Activated CD4-positive, alpha-beta memory T cell treated with anti-CD3 and anti-CD28 coated beads for 36 hours (primary cell): ENCODE measurements at regions of chr4 and their contacts with region 1.

Region 1: GRCh38 chr4:88613417-88613875 is 21.2 kb downstream of the HERC3 start:
- DNase-seq: peak; percentile 48
- H3K4me3 Mint-ChIP-seq: peak overlapping the region; percentile 58
- H3K27ac Mint-ChIP-seq: peak overlapping the region; percentile 87
- H3K4me1 Mint-ChIP-seq: peaks cover 78% of the 10 kb centered on the region
- H3K27me3 Mint-ChIP-seq: no peaks in the 10 kb centered on the region

Region 2: DNA sequence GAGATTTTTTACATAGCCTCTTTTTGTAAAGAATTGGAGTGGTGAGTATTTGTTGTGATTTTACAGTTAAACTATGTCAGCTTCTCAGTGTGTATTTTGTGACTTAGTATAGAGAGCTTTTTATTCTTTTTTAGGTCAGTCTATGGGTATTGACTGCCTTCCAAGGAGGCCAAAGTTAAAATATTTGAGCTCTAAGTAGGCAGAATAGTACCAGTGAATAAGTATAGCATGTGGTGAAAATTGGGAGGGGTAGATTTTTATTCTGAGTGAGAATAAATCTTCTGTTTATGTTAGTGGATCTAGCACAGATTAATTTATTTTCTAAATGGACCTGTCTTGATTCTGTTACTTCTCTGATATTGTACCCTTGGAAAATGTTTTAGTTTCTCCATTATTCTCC is 16.4 kb after region 1 on chr4:
- CTCF ChIA-PET with region 1: no interaction called
- POLR2A ChIA-PET with region 1: no interaction called
- intact Hi-C with region 1: loop called (anchors 2 kb)
- DNase-seq: no peak
- H3K4me3 Mint-ChIP-seq: no peak overlapping the region
- H3K27ac Mint-ChIP-seq: no peak overlapping the region
- H3K4me1 Mint-ChIP-seq: peaks cover 26% of the 10 kb centered on the region
- H3K27me3 Mint-ChIP-seq: no peaks in the 10 kb centered on the region

Region 3: DNA sequence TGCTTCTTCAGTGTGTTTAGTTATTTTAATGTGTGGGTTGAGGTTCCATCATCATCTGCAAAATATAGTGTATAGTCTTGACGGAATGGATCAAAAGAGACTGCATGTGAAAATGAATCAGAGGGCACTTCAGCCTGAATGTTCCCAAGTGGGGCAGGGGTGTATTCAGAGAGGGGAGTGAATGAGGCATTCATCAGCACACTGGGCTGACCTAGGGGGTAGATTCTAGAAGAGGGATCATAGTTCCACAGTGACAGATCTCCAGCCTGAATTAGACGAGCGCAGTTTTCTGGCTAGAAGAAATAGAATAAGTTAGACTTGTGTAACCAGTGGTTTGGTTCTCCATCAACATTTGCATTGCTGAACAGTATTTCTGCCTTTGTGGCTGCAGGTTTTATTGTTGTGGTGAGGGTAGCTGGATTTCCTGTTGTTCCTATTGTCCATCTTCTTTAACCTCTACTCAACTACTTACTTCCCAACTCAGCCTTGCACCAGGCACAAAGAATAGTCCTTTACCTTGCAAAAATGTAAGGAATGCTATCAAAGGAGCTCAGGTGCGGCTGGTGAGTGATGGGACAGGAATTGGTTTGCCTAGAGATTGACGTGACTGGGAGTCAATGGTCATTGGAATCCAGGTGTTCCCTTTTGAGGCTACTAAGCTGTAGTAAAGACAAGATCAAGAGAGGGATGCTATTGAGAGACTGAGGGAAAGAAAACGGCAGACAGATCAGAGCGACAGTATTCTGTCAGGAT is 33.3 kb after region 1 on chr4:
- CTCF ChIA-PET with region 1: interaction called, 4 read pairs
- POLR2A ChIA-PET with region 1: no interaction called
- intact Hi-C with region 1: loop called (anchors 5 kb)
- DNase-seq: no peak
- H3K4me3 Mint-ChIP-seq: no peak overlapping the region
- H3K27ac Mint-ChIP-seq: no peak overlapping the region
- H3K4me1 Mint-ChIP-seq: peaks cover 53% of the 10 kb centered on the region
- H3K27me3 Mint-ChIP-seq: no peaks in the 10 kb centered on the region

Region 4: GRCh38 chr4:88803600-88804096 is 190.2 kb after region 1 on chr4:
- CTCF ChIA-PET with region 1: no interaction called
- POLR2A ChIA-PET with region 1: no interaction called
- intact Hi-C with region 1: loop called (anchors 5 kb)
- DNase-seq: peak; percentile 26
- H3K4me3 Mint-ChIP-seq: no peak overlapping the region
- H3K27ac Mint-ChIP-seq: no peak overlapping the region
- H3K4me1 Mint-ChIP-seq: peaks cover 18% of the 10 kb centered on the region
- H3K27me3 Mint-ChIP-seq: peaks cover 7% of the 10 kb centered on the region